Astrocyte of the spinal cord (primary cell): ENCODE measurements at regions of chr3 and their contacts with region 1.

Region 1: GRCh38 chr3:101803173-101803782 is 24.3 kb downstream of the NXPE3 start:
- DNase-seq: peak; percentile 68
- H3K4me3 ChIP-seq: no peak overlapping the region
- CTCF ChIP-seq: peak; percentile 84

Region 2: DNA sequence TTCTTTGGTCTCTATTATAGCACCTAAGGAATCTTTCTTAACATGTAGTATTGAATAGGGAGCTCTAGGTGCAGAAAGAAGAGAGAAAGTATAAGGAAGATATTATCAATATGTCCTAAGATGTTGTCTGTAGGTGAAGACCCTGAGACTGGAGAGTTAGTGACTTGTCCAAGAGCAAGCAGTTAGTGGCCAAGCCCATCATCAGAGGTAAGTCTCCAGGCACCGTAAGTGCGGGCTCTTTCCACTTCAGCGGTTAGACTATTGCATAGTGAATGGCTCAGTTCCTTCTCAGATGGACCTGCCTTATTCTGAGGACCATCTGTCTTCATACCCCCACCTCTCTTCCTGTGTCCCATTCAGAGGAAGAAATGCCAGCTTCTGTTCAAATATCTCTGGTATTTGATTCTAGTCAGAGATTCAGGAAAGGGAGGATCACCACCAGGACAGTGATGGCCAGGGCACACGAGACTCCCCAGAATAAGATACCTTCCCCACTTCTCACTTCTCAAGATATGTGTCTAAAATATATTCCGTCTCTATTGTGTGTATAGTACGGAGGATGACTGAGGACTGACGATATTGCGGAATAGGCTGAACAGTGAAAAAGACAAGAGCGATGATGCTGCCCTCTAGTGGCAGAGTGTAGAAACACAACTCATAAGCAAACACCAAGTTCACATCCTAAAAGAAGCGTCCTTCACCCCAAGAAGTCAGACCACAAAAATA is 1213.0 kb before region 1 on chr3:
- in situ Hi-C with region 1: no loop called
- DNase-seq: peak; percentile 71
- H3K4me3 ChIP-seq: peak overlapping the region; percentile 10
- CTCF ChIP-seq: peak; percentile 77

Region 3: GRCh38 chr3:102229062-102229655 is 425.9 kb after region 1 on chr3:
- in situ Hi-C with region 1: loop called (anchors 10 kb)
- DNase-seq: peak; percentile 77
- H3K4me3 ChIP-seq: no peak overlapping the region
- CTCF ChIP-seq: peak; percentile 96